ENCODE measurements at regions of chr5 and their contacts with region 1.

Region 1: DNA sequence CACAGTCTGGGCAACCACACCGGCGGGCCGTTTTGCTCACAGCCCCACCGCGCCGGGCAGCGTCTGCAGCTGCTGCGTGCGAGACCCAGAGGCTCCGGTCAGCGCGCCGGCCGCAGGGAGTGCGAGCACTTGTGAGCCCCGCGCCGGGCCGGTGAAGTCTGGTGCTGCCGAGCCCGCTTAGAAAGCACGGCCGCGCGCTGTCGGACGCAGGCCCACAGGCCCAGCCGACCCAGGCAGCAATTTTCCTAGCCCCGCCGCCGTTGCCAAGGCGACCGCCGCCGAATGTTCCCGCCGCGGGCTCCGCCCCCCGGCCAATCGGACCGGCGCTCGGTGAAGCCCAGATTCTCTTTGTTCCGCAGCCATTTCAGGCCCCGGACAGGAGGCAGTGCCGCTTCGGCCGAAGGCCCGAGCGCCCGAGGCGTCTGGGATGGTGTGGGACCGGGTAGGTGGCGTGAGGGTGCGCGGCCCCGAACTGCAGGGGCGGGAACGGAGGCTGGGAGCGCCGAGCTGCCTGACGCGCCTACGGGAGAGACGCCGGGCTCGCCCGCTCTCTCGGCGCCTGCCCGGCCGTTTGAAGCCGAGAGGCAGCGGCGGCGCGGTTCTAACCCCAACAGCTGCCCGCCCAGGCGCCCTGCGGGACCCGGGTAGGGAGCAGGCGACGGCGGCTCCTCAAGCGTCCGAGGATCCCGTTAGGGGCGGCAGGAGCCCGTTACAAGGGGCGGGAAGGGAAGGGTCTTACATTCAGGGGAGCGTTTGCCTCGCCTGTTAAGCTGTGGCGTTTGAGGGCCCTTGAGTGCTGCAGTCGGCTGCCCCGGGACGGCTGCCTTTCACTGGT is at the start of gene TNPO1:
- DNase-seq: peak; percentile 96
- H3K4me3 Mint-ChIP-seq: peak within 1 kb of the TSS; percentile 93
- H3K27ac Mint-ChIP-seq: peak within 1 kb of the TSS; percentile 92
- H3K4me1 Mint-ChIP-seq: peaks cover 11% of the 10 kb centered on the region
- H3K27me3 Mint-ChIP-seq: peaks cover 19% of the 10 kb centered on the region
- total RNA-seq, gene TNPO1: 138 TPM in 2 replicates

Region 2: DNA sequence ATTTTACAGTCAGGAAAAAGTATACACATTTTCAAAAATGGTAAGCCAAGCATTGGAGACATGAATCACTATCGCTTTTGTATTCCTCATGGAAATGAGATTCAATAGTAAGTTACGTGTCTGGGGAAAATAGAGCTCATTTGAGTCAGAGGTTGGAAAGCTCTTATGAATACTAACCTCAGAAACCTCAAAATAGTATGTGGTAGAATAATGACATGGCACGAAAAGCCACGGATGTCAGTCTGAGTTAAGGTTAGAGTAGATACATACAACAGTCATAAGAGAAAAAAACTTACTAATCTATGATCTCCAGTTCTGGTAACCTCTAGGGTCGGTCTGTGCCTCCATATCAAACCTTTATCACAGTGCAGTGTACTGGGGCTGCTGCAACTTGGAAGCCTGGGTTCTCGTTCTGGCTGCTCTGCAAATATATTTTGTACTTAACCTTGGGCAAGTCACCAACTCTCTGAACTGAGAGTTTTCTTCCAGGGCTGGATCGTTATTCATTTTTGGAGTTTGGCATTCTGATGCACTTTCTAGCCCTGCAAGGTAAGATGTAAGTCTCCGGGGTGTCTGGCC is 677.5 kb before region 1 on chr5:
- intact Hi-C with region 1: loop called (anchors 10 kb)
- DNase-seq: peak; percentile 56
- H3K4me3 Mint-ChIP-seq: no peak overlapping the region
- H3K27ac Mint-ChIP-seq: no peak overlapping the region
- H3K4me1 Mint-ChIP-seq: peaks cover 8% of the 10 kb centered on the region
- H3K27me3 Mint-ChIP-seq: peaks cover 53% of the 10 kb centered on the region

Region 3: GRCh38 chr5:72611118-72611730 is 205.3 kb before region 1 on chr5:
- intact Hi-C with region 1: loop called (anchors 2 kb)
- DNase-seq: peak; percentile 76
- H3K4me3 Mint-ChIP-seq: no peak overlapping the region
- H3K27ac Mint-ChIP-seq: no peak overlapping the region
- H3K4me1 Mint-ChIP-seq: no peaks in the 10 kb centered on the region
- H3K27me3 Mint-ChIP-seq: peaks cover 16% of the 10 kb centered on the region

Region 4: DNA sequence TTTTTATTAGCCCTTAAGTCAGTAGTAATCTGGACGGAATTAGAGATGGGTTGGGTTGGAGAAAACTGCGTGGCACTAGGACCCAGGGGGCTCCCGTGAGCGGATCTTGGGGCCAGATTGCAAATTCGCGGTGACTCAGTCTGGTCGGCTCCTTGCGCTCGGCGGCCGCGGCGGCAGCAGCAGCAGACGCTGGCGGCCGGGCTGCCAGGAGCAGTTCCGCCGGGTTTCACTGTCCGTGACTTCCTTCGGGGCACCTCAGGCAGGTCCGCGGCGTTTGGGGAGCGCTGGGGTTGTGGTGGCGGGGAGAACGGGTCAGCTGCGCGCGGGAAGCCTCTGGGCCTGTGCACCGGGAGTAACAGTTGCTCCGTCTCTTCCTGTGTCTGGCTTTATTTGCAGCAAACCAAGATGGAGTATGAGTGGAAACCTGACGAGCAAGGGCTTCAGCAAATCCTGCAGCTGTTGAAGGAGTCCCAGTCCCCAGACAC is 31.5 kb after region 1 on chr5:
- intact Hi-C with region 1: loop called (anchors 1 kb)
- DNase-seq: peak; percentile 95
- H3K4me3 Mint-ChIP-seq: peak overlapping the region; percentile 99
- H3K27ac Mint-ChIP-seq: peak overlapping the region; percentile 99
- H3K4me1 Mint-ChIP-seq: peaks cover 29% of the 10 kb centered on the region
- H3K27me3 Mint-ChIP-seq: peaks cover 18% of the 10 kb centered on the region

Region 5: DNA sequence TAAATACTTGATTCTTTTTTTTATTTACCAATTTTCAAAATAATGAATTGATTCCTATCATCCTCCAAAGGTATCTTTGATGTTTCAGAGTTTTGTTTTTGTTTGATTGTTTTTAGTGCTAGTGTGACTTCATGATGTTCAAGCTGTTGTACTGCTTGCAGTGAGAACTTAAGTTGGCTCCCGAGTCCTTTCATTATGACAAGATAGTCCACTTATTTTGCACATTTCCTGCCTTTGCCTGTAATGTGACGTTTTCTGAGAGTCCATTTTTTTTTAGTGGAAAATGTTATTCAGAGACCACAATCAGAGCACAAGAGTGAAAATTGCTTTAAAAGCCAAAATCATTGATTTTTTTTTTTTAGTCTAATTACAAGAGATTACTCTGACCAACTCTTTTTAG is 79.2 kb after region 1 on chr5:
- intact Hi-C with region 1: loop called (anchors 10 kb)
- DNase-seq: no peak
- H3K4me3 Mint-ChIP-seq: peak overlapping the region; percentile 0
- H3K27ac Mint-ChIP-seq: peak overlapping the region; percentile 43
- H3K4me1 Mint-ChIP-seq: peaks cover 18% of the 10 kb centered on the region
- H3K27me3 Mint-ChIP-seq: no peaks in the 10 kb centered on the region

Measured in activated CD4-positive, alpha-beta T cell treated with anti-CD3 and anti-CD28 coated beads, Interleukin-2, amount 10 ng/mL, durations not matched to agents 24 days and 14 days (primary cell).